H1 (cell line): ENCODE measurements at regions of chr1 and their contacts with region 1.

Region 1: GRCh38 chr1:64572222-64572900 is 102.4 kb downstream of the CACHD1 start:
- DNase-seq: no peak
- H3K4me3 ChIP-seq: peak overlapping the region in 3 of 4 experiments; percentile 16 to 28 (median 19); a peak in 2 of 8 replicates
- H3K27ac ChIP-seq: 0 out of 2 replicates have a peak overlapping the region, but pooled peaks have one; percentile 38
- H3K4me1 ChIP-seq: peaks cover 11 to 34% (median 29%) of the 10 kb centered on the region in 4 experiments
- H3K27me3 ChIP-seq: no peaks in the 10 kb centered on the region
- CTCF ChIP-seq: no peak
- EP300 ChIP-seq: no peak
- POLR2A ChIP-seq: no peak; a peak in 1 of 3 replicates
- RAD21 ChIP-seq: peak in 1 of 2 experiments; percentile 7; a peak in 3 of 4 replicates

Region 2: GRCh38 chr1:64584479-64584878 is 12.1 kb after region 1 on chr1:
- CTCF ChIA-PET with region 1: interaction called, 23 read pairs
- POLR2A ChIA-PET with region 1: interaction called, 5 read pairs
- DNase-seq: no peak
- H3K4me3 ChIP-seq: no peak overlapping the region
- H3K27ac ChIP-seq: no peak overlapping the region
- H3K4me1 ChIP-seq: peaks cover 0 to 5% (median 0%) of the 10 kb centered on the region in 4 experiments; a peak in 1 of 7 replicates
- H3K27me3 ChIP-seq: no peaks in the 10 kb centered on the region
- CTCF ChIP-seq: peak in 2 of 3 experiments; percentile 22 to 51; a peak in 2 of 4 replicates
- EP300 ChIP-seq: no peak
- POLR2A ChIP-seq: no peak
- RAD21 ChIP-seq: peak; percentile 47 to 53

Region 3: GRCh38 chr1:65056234-65056633 is 483.9 kb after region 1 on chr1:
- CTCF ChIA-PET with region 1: no interaction called
- POLR2A ChIA-PET with region 1: no interaction called
- DNase-seq: no peak
- H3K4me3 ChIP-seq: no peak overlapping the region
- H3K27ac ChIP-seq: no peak overlapping the region
- H3K4me1 ChIP-seq: no peaks in the 10 kb centered on the region
- H3K27me3 ChIP-seq: no peaks in the 10 kb centered on the region
- CTCF ChIP-seq: no peak
- EP300 ChIP-seq: no peak
- POLR2A ChIP-seq: no peak
- RAD21 ChIP-seq: no peak